AG04450 (cell line): ENCODE measurements at regions of chr14 and their contacts with region 1.

Region 1: GRCh38 chr14:53295985-53296582 is 143.0 kb upstream of the DDHD1 start:
- DNase-seq: no peak
- H3K4me3 ChIP-seq: no peak overlapping the region
- H3K27ac ChIP-seq: no peak overlapping the region
- H3K27me3 ChIP-seq: no peaks in the 10 kb centered on the region
- CTCF ChIP-seq: peak; percentile 52

Region 2: GRCh38 chr14:53278930-53279506 is 17.1 kb before region 1 on chr14:
- CTCF ChIA-PET with region 1: interaction called, 22 read pairs
- POLR2A ChIA-PET with region 1: no interaction called
- DNase-seq: peak; percentile 45
- H3K4me3 ChIP-seq: no peak overlapping the region
- H3K27ac ChIP-seq: peak overlapping the region; percentile 70
- H3K27me3 ChIP-seq: no peaks in the 10 kb centered on the region
- CTCF ChIP-seq: no peak

Region 3: GRCh38 chr14:53306267-53306721 is 10.2 kb after region 1 on chr14:
- CTCF ChIA-PET with region 1: interaction called, 45 read pairs
- POLR2A ChIA-PET with region 1: no interaction called
- DNase-seq: peak; percentile 42
- H3K4me3 ChIP-seq: peak overlapping the region; percentile 55
- H3K27ac ChIP-seq: no peak overlapping the region
- H3K27me3 ChIP-seq: peaks cover 2% of the 10 kb centered on the region
- CTCF ChIP-seq: peak; percentile 79

Region 4: DNA sequence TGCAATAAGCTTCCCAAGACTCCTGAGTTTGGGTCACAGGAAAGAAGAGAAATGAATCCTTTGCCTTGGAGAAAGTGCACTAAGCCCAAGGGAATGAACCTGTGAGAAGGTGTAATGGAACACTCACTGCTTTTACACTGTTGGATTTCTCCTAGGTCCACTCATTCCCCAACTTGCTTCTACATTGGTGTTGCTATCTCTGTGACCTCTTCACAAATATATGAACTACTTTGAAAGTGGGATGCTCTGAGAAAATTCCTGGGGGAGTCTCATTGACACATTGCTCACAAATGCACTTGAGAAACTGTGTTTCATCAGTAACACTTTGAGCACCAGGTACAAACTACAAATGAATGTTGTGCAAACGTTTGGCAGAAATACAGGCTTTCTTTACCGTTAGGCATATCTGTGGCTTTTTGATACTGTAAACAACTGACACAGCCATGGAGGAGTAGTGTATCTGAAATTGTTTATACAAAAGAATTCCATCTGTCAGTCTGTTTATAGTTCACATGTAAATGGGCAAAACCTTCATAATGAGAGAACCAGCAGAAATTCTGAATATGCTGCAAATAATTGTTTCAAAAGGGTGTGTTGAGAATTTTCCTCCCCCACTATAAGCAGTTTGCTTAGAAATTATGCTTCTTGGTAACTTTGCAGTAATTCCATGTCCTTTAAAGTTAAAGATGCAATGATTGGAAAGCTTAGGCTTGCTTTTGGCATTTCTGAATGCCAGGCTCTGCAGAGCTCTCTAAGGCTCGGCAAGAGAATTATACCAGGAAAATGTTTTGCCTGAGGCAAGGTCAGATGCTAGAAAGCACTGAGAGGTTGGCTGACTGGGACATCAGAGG is 205.5 kb after region 1 on chr14:
- CTCF ChIA-PET with region 1: no interaction called
- POLR2A ChIA-PET with region 1: no interaction called
- DNase-seq: peak; percentile 90
- H3K4me3 ChIP-seq: no peak overlapping the region
- H3K27ac ChIP-seq: peak overlapping the region; percentile 71
- H3K27me3 ChIP-seq: no peaks in the 10 kb centered on the region
- CTCF ChIP-seq: no peak

Region 5: GRCh38 chr14:54175298-54175942 is 879.3 kb after region 1 on chr14:
- CTCF ChIA-PET with region 1: interaction called, 11 read pairs
- POLR2A ChIA-PET with region 1: no interaction called
- DNase-seq: peak; percentile 43
- H3K4me3 ChIP-seq: no peak overlapping the region
- H3K27ac ChIP-seq: no peak overlapping the region
- H3K27me3 ChIP-seq: peaks cover 10% of the 10 kb centered on the region
- CTCF ChIP-seq: peak; percentile 85